PC-9 (cell line): ENCODE measurements at regions of chr2 and their contacts with region 1.

Region 1: DNA sequence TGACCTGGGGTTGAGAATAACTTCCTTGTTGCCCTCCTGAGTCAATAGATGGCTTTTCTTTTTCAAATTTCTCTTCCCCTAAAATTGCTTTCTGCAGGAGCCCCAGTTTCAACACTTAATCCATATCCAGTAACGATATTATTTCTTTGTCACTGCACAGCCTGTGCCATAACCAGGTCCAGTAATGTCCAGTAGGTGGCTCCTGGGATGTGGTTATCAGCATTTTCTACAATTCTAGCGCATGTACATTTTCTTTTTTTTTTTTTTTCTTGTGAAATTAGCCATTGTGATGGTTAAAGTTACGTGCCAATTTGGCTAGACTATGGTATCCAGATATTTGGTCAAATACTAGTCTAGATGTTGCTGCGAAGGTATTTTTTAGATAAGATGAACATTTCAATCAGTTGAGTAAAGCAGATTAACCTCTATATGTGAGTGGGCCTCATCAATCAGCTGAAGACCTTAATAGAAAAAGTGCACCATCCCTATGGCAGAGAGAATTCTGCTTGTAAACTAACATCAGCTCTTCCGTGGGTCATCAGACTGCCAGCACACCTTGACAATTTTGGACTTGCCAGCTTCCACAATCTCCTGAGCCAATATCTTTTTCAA is 72.9 kb upstream of the SCG2 start:
- DNase-seq: peak; percentile 50 to 64
- H3K4me3 ChIP-seq: no peak overlapping the region
- H3K27ac ChIP-seq: no peak overlapping the region
- H3K4me1 ChIP-seq: no peaks in the 10 kb centered on the region
- H3K27me3 ChIP-seq: no peaks in the 10 kb centered on the region
- CTCF ChIP-seq: peak; percentile 94

Region 2: GRCh38 chr2:223247136-223247535 is 428.0 kb before region 1 on chr2:
- CTCF ChIA-PET with region 1: no interaction called
- POLR2A ChIA-PET with region 1: no interaction called
- intact Hi-C with region 1: loop called (anchors 5 kb)
- DNase-seq: peak in 1 of 2 experiments; percentile 47
- H3K4me3 ChIP-seq: no peak overlapping the region
- H3K27ac ChIP-seq: no peak overlapping the region
- H3K4me1 ChIP-seq: no peaks in the 10 kb centered on the region
- H3K27me3 ChIP-seq: no peaks in the 10 kb centered on the region
- CTCF ChIP-seq: peak; percentile 93

Region 3: DNA sequence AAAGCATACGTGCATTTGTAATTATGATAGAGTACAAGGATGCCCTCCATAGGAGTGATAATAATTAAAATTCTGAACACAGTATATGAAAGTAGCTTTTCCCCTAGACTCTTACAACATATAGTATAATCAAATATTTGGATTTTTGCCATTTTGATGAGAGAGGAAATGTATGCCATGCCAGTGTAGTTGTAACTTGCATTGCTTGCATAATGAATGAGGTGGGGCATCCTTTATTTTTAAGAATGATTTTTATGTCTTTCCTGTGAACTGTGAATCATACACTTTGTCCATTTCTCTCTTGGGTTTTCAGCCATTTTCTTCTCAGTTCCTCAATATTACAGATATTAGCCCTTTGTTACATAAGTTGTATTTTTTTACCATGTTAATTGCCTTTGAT is 270.5 kb before region 1 on chr2:
- CTCF ChIA-PET with region 1: no interaction called
- POLR2A ChIA-PET with region 1: no interaction called
- intact Hi-C with region 1: no loop called
- DNase-seq: no peak
- H3K4me3 ChIP-seq: no peak overlapping the region
- H3K27ac ChIP-seq: no peak overlapping the region
- H3K4me1 ChIP-seq: no peaks in the 10 kb centered on the region
- H3K27me3 ChIP-seq: no peaks in the 10 kb centered on the region
- CTCF ChIP-seq: no peak

Region 4: DNA sequence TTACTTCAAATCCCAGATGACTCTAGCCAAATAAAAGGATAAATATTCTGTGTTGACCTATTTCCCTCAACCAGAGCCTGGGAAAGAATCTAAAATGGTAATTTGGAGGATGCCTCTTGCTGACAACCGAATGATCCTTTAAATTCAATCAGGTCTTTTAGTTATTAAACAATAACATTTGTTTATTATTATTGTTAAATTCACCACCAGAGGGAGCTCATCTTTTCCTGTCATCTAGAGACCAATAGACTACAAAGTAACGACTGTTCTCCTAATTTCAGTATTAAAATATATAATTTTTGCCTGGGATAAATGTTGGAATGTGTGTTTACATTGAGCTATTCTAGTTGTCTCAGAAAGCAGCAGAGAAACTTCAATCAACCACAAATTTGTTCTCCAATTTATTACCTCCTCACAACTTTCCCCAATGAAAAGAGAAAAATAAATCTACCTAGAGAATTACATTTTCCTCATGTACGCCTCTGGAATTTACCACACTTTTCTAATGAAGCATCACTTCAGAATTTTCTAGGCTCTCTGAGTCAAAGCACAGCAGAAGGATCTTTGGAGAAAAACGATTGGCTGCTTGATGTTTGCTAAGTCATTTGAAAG is 215.7 kb before region 1 on chr2:
- CTCF ChIA-PET with region 1: interaction called, 3 read pairs
- POLR2A ChIA-PET with region 1: no interaction called
- intact Hi-C with region 1: loop called (anchors 5 kb)
- DNase-seq: no peak
- H3K4me3 ChIP-seq: no peak overlapping the region
- H3K27ac ChIP-seq: no peak overlapping the region
- H3K4me1 ChIP-seq: peaks cover 21% of the 10 kb centered on the region
- H3K27me3 ChIP-seq: no peaks in the 10 kb centered on the region
- CTCF ChIP-seq: peak; percentile 75

Region 5: DNA sequence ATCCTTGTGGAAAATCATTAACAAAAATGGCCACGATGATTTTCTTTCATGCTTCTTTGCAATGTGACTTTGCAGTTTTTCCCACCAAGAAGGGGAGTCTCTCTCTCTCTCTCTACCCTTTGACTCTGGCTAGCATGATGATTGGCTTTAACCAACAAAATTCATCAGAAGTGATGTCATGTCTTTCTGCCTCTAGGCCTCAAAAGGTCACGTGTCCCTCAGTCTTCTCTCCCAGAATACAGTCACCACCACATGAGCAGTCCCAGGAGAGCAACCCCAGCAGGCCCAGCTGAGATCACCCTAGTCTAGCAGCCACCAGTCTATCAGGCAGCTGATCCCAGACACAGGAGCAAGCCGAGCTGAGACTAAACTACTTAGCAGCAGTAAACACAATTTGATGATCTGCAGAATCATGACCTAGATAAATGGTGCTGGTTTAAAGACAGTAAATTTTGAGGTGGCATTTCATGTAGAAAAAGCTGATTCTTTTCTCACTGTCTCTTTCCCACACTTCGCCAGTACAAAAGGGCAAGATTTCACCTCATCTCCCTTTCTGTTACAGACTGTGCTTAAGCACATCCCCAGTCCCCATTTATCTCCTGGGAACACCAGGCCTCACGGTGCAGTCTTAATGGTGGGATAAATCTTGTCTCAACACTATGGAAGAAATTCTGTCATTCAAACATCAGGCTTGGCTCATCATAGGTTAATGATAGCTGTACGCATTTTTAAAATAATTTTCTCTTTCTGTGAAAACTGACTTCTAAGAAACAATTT is 205.6 kb before region 1 on chr2:
- CTCF ChIA-PET with region 1: no interaction called
- POLR2A ChIA-PET with region 1: no interaction called
- intact Hi-C with region 1: no loop called
- DNase-seq: no peak
- H3K4me3 ChIP-seq: no peak overlapping the region
- H3K27ac ChIP-seq: no peak overlapping the region
- H3K4me1 ChIP-seq: peaks cover 16% of the 10 kb centered on the region
- H3K27me3 ChIP-seq: no peaks in the 10 kb centered on the region
- CTCF ChIP-seq: no peak

Region 6: DNA sequence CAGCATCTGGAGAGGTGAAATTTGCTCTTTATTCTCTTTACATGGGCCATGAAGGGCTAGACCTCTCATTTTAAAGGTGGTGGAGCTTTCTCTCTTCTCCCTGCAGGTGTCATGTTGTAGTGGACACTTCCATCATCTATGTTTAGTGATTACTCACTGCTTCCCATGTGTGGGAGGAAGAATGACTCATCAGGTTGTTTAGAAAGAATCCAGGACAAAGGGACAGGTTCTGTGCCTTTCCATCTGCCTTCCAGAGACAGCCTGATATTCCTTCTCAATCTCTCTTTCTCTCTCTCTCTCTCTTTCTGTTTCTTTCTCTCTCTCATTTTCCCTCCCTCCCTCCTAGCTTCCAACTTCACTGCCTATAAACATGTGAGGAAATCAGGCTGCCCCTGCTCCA is 111.6 kb before region 1 on chr2:
- CTCF ChIA-PET with region 1: no interaction called
- POLR2A ChIA-PET with region 1: no interaction called
- intact Hi-C with region 1: loop called (anchors 5 kb)
- DNase-seq: peak; percentile 60 to 99
- H3K4me3 ChIP-seq: peak overlapping the region; percentile 34
- H3K27ac ChIP-seq: peak overlapping the region; percentile 92
- H3K4me1 ChIP-seq: peaks cover 42% of the 10 kb centered on the region
- H3K27me3 ChIP-seq: no peaks in the 10 kb centered on the region
- CTCF ChIP-seq: peak; percentile 37; the same call in 1 of the 2 replicates